Activated T-helper 1 cell treated with anti-CD3 and anti-CD28 coated beads, Interleukin-12 subunit alpha, Interleukin-12 subunit beta, Interleukin-2, Interleukin-4 antibody, amounts not matched to agents 30 ng/mL and 10 ng/mL and 1 ng/mL, durations not matched to agents 14 hours and 24 hours and 36 hours (primary cell): ENCODE measurements at regions of chr15 and their contacts with region 1.

Region 1: GRCh38 chr15:81400640-81401236 is 26.7 kb upstream of the TMC3 start:
- DNase-seq: no peak
- H3K4me3 Mint-ChIP-seq: no peak overlapping the region
- H3K27ac Mint-ChIP-seq: no peak overlapping the region
- H3K4me1 Mint-ChIP-seq: no peaks in the 10 kb centered on the region
- H3K27me3 Mint-ChIP-seq: peaks cover 5% of the 10 kb centered on the region

Region 2: DNA sequence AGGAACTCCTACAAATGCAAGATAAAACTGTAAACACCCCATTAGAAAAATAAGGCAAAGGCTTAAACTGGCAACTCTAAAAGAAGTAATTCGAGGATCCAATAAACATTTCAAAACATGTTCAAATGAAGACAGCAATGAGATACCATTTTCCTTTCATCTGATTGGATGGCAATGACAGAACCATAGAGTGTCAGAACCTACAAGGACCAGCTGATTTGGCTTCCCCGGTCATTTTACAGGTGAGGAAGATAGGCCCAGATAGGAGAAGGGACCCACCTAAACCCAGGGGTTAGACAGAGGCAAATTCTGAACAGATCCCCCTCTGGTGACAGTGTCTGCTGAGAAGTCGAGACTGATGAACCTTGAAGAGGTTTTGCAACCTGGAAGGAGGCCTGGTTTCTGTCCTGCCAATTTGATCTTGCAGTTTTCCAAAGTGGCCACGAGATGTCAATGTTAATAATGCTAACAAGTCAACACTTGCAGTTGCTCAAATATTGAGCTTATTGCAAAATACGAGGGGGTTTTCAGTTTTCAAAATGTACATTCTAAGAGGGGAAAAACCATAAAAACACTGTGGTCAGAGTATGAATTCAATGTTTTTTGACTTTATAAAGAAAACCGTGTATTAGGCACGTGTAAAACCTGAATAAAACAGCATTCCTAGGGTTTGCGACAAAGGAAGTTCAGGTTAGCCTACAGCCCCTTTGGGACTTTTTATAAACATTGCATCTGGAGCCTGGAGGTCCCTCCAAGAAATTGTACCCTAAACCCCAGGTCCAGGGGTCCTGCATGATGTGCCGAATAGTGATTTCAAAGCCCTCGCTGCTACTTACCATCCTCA is 245.1 kb before region 1 on chr15:
- intact Hi-C with region 1: loop called (anchors 2 kb)
- DNase-seq: no peak
- H3K4me3 Mint-ChIP-seq: no peak overlapping the region
- H3K27ac Mint-ChIP-seq: no peak overlapping the region
- H3K4me1 Mint-ChIP-seq: peaks cover 6% of the 10 kb centered on the region
- H3K27me3 Mint-ChIP-seq: peaks cover 17% of the 10 kb centered on the region

Region 3: GRCh38 chr15:81723701-81724100 is 323.0 kb after region 1 on chr15:
- intact Hi-C with region 1: no loop called
- DNase-seq: no peak
- H3K4me3 Mint-ChIP-seq: no peak overlapping the region
- H3K27ac Mint-ChIP-seq: no peak overlapping the region
- H3K4me1 Mint-ChIP-seq: no peaks in the 10 kb centered on the region
- H3K27me3 Mint-ChIP-seq: peaks cover 1% of the 10 kb centered on the region